ENCODE measurements at regions of chr5 and their contacts with region 1.

Region 1: DNA sequence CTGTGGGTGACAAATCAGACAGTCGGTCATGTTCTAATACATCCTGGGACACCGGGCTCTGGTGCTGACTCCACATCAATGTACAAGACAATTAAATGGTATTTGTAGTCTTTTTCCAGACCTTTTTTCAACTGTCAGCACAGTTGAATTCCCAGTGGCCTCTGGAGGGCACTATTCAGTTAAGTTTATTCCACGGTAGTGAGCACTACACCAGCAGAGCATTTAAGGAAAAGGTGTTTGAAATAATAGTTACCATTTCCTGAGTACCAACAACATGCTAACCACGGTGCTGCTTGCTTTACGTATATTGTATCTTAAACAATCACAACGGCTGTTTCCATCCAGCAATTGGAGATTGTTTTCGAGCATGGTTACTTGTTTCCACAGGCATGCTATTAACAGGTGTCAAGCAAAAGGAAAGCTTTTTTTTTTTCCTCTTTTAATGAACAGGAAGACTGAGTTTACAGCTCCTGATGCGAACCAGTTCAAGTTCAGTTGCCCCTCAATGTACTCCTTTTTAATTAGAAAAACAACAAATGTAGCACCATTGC is 186.7 kb downstream of the PDZD2 start:
- DNase-seq: peak; percentile 76
- H3K4me3 Mint-ChIP-seq: no peak overlapping the region
- H3K27ac Mint-ChIP-seq: no peak overlapping the region
- H3K4me1 Mint-ChIP-seq: peaks cover 6% of the 10 kb centered on the region
- H3K27me3 Mint-ChIP-seq: no peaks in the 10 kb centered on the region
- CTCF ChIP-seq: peak; percentile 71

Region 2: GRCh38 chr5:31702709-31703108 is 122.9 kb before region 1 on chr5:
- CTCF ChIA-PET with region 1: no interaction called
- POLR2A ChIA-PET with region 1: no interaction called
- intact Hi-C with region 1: no loop called
- DNase-seq: no peak
- H3K4me3 Mint-ChIP-seq: no peak overlapping the region
- H3K27ac Mint-ChIP-seq: no peak overlapping the region
- H3K4me1 Mint-ChIP-seq: no peaks in the 10 kb centered on the region
- H3K27me3 Mint-ChIP-seq: peaks cover 60% of the 10 kb centered on the region
- CTCF ChIP-seq: no peak

Region 3: GRCh38 chr5:31809050-31809870 is 16.3 kb before region 1 on chr5:
- CTCF ChIA-PET with region 1: interaction called, 10 read pairs
- POLR2A ChIA-PET with region 1: interaction called, 3 read pairs
- intact Hi-C with region 1: no loop called
- DNase-seq: peak; percentile 81
- H3K4me3 Mint-ChIP-seq: no peak overlapping the region
- H3K27ac Mint-ChIP-seq: no peak overlapping the region
- H3K4me1 Mint-ChIP-seq: peaks cover 6% of the 10 kb centered on the region
- H3K27me3 Mint-ChIP-seq: peaks cover 24% of the 10 kb centered on the region
- CTCF ChIP-seq: peak; percentile 79

Region 4: GRCh38 chr5:31854181-31855133 is 28.9 kb after region 1 on chr5:
- CTCF ChIA-PET with region 1: interaction called, 22 read pairs
- POLR2A ChIA-PET with region 1: interaction called, 5 read pairs
- intact Hi-C with region 1: loop called (anchors 2 kb)
- DNase-seq: peak; percentile 69
- H3K4me3 Mint-ChIP-seq: peak overlapping the region; percentile 76
- H3K27ac Mint-ChIP-seq: peak overlapping the region; percentile 49
- H3K4me1 Mint-ChIP-seq: peaks cover 11% of the 10 kb centered on the region
- H3K27me3 Mint-ChIP-seq: no peaks in the 10 kb centered on the region
- CTCF ChIP-seq: no peak

Region 5: GRCh38 chr5:31993165-31993961 is 167.8 kb after region 1 on chr5:
- CTCF ChIA-PET with region 1: interaction called, 4 read pairs
- POLR2A ChIA-PET with region 1: interaction called, 3 read pairs
- intact Hi-C with region 1: loop called (anchors 5 kb)
- DNase-seq: peak; percentile 39
- H3K4me3 Mint-ChIP-seq: no peak overlapping the region
- H3K27ac Mint-ChIP-seq: no peak overlapping the region
- H3K4me1 Mint-ChIP-seq: peaks cover 42% of the 10 kb centered on the region
- H3K27me3 Mint-ChIP-seq: no peaks in the 10 kb centered on the region
- CTCF ChIP-seq: no peak

Region 6: DNA sequence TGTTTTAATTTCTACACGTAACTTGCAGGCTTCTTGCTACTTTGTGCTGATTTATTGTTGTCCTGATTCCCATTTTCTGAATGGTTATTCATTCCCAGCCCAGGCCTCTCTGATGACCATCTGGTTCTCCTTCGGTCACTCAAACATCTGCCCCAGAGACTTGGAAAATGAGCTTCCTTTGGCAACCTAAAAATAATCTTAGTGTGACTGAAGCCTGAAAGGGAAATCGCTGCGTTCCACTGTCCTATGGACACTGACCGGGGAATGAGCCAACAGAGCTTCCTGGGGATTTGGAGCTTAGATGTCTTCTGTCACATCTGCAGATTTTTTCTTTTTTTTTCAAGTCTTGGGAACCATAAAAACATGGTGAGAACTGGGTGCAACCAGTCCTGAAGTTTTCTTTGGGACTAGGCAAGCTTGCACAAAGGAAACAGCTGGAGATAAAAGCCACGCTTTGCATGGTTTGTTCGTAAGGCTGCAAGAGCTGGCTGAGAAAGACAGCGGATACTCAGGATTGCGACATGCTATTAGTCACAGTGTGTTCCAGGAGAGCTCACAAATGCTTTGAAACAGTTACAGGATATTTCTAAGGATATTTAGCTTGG is 202.2 kb after region 1 on chr5:
- CTCF ChIA-PET with region 1: interaction called, 14 read pairs
- POLR2A ChIA-PET with region 1: no interaction called
- intact Hi-C with region 1: no loop called
- DNase-seq: peak; percentile 98
- H3K4me3 Mint-ChIP-seq: peak overlapping the region; percentile 38
- H3K27ac Mint-ChIP-seq: peak overlapping the region; percentile 86
- H3K4me1 Mint-ChIP-seq: peaks cover 54% of the 10 kb centered on the region
- H3K27me3 Mint-ChIP-seq: no peaks in the 10 kb centered on the region
- CTCF ChIP-seq: no peak

Region 7: DNA sequence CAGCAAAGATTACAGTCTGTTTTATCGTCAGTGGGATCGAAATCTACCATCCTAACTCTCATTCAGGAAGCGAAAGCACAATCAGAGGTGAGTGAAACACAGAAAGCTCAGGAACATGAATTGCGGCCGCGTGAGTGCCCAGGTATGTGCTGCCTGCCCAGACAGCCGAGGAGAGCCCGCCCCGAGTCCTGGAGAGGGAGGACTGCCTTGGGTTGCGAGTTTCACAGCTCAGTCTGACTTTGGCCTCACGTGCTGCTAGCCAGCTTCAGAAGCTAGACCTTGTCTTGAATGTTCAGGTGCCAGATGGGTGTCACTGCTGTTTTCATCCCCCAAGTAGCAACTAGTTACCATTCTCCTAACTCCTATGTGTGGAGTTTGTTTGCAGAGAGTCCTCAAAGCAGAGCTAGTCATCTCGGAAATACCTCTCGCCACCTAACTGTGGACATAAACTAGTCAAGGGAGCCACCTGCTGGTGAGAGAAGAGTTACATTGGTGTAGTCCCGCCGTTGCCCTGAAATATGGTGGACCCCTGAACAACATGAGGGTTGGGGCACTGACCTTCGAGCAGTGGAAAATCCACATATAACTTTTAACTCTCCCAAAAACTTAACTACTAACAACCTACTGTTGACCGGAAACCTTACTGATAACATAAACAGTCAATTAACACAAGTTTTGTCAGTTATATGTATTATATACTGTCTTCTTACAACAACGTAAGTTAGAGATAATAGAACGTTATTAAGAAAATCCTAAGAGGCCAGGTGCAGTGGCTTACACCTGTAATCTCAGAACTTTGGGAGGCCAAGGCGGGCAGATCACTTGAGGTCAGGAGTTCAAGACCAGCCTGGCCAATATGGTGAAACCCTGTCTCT is 267.6 kb after region 1 on chr5:
- CTCF ChIA-PET with region 1: interaction called, 68 read pairs
- POLR2A ChIA-PET with region 1: interaction called, 8 read pairs
- intact Hi-C with region 1: loop called (anchors 1 kb)
- DNase-seq: peak; percentile 81
- H3K4me3 Mint-ChIP-seq: no peak overlapping the region
- H3K27ac Mint-ChIP-seq: peak overlapping the region; percentile 7
- H3K4me1 Mint-ChIP-seq: no peaks in the 10 kb centered on the region
- H3K27me3 Mint-ChIP-seq: no peaks in the 10 kb centered on the region
- CTCF ChIP-seq: peak; percentile 67

Region 8: DNA sequence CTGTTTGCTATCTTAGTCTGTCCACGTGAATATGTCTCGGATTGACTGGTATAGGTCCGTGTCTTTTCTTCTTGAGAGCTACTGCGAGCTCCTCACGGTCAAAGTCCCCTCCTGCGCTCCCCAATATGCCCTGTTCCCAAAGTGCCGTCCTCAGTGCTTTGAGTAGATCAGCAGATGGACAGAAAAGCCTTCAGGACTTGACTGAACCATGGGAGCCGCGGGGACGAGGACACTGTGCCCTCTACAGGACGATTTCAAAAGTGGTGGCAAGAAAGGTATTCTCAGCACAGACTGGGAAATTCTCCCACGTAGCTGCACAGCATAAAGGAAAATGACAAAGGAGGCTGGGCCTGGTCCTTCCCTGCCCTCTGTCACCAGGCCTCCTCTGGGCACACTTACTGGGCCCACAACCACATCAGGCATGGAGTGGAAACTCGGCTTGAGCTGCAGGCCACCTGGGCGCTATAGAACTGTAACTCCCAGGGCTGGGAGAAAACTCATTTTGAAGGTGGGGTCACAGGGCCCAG is 503.8 kb after region 1 on chr5:
- CTCF ChIA-PET with region 1: no interaction called
- POLR2A ChIA-PET with region 1: no interaction called
- intact Hi-C with region 1: loop called (anchors 5 kb)
- DNase-seq: peak; percentile 72
- H3K4me3 Mint-ChIP-seq: no peak overlapping the region
- H3K27ac Mint-ChIP-seq: no peak overlapping the region
- H3K4me1 Mint-ChIP-seq: no peaks in the 10 kb centered on the region
- H3K27me3 Mint-ChIP-seq: no peaks in the 10 kb centered on the region
- CTCF ChIP-seq: peak; percentile 56